Activated naive CD4-positive, alpha-beta T cell treated with anti-CD3 and anti-CD28 coated beads, Interleukin-2, amount 10 ng/mL, durations not matched to agents 7 days and 5 days (primary cell): ENCODE measurements at regions of chr9 and their contacts with region 1.

Region 1: DNA sequence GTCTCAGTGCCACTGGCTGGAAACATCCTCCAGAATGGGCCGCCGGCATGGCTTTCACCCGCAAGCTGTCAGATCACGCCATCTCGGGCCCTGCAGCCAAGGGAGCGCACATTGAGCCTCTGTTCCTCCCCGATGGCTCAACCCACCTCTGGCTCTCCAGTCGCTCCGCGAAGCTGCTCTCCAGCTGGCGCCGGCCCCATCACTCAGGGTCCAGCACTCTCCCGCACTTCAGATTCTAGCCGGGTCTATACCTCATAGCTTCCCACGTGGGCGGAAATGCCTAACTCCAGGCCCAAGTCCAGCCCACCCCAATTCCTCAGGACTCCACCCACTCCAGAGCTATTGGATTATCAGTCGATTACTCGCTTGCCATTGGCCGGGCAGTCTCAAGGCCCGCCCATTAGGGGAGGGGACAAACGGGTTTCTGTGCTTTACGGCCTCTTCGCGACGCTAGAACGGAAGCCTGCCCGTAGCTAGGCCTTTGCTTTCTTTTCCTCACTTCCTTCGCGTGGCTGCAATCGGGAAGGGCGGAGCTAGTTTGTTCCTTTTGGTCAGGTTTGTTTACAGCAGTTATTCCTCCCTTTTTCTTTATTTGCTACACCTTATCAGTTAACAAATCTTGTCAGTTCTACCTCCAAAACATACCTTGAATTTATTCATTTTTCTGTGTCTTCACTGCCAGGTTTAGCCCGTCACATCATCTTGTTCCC is at the start of gene NOL6:
- DNase-seq: peak; percentile 99
- H3K4me3 Mint-ChIP-seq: peak within 1 kb of the TSS; percentile 96
- H3K27ac Mint-ChIP-seq: peak within 1 kb of the TSS; percentile 93
- H3K4me1 Mint-ChIP-seq: peaks cover 30% of the 10 kb centered on the region
- H3K27me3 Mint-ChIP-seq: no peaks in the 10 kb centered on the region

Region 2: GRCh38 chr9:32928145-32928763 is 545.5 kb before region 1 on chr9:
- CTCF ChIA-PET with region 1: no interaction called
- DNase-seq: no peak
- H3K4me3 Mint-ChIP-seq: no peak overlapping the region
- H3K27ac Mint-ChIP-seq: no peak overlapping the region
- H3K4me1 Mint-ChIP-seq: no peaks in the 10 kb centered on the region
- H3K27me3 Mint-ChIP-seq: peaks cover 10% of the 10 kb centered on the region

Region 3: GRCh38 chr9:33446946-33447798 is 26.6 kb before region 1 on chr9 and contains the start of gene AQP3:
- CTCF ChIA-PET with region 1: interaction called, 255 read pairs
- DNase-seq: peak; percentile 91
- H3K4me3 Mint-ChIP-seq: peak within 1 kb of the TSS; percentile 91
- H3K27ac Mint-ChIP-seq: peak within 1 kb of the TSS; percentile 97
- H3K4me1 Mint-ChIP-seq: peaks cover 68% of the 10 kb centered on the region
- H3K27me3 Mint-ChIP-seq: no peaks in the 10 kb centered on the region